ENCODE measurements at regions of chr7 and their contacts with region 1.

Region 1: GRCh38 chr7:45923290-45923689 is 2.2 kb upstream of the IGFBP3 start:
- DNase-seq: peak; percentile 78
- H3K4me3 ChIP-seq: peak overlapping the region; percentile 75
- H3K27ac ChIP-seq: peak overlapping the region; percentile 49
- H3K4me1 ChIP-seq: peaks cover 47% of the 10 kb centered on the region
- H3K27me3 ChIP-seq: peaks cover 10% of the 10 kb centered on the region
- CTCF ChIP-seq: peak; percentile 96

Region 2: GRCh38 chr7:45973725-45974532 is 50.6 kb after region 1 on chr7:
- intact Hi-C with region 1: no loop called
- DNase-seq: no peak
- H3K4me3 ChIP-seq: no peak overlapping the region
- H3K27ac ChIP-seq: no peak overlapping the region
- H3K4me1 ChIP-seq: peaks cover 25% of the 10 kb centered on the region
- H3K27me3 ChIP-seq: no peaks in the 10 kb centered on the region
- CTCF ChIP-seq: no peak

Region 3: DNA sequence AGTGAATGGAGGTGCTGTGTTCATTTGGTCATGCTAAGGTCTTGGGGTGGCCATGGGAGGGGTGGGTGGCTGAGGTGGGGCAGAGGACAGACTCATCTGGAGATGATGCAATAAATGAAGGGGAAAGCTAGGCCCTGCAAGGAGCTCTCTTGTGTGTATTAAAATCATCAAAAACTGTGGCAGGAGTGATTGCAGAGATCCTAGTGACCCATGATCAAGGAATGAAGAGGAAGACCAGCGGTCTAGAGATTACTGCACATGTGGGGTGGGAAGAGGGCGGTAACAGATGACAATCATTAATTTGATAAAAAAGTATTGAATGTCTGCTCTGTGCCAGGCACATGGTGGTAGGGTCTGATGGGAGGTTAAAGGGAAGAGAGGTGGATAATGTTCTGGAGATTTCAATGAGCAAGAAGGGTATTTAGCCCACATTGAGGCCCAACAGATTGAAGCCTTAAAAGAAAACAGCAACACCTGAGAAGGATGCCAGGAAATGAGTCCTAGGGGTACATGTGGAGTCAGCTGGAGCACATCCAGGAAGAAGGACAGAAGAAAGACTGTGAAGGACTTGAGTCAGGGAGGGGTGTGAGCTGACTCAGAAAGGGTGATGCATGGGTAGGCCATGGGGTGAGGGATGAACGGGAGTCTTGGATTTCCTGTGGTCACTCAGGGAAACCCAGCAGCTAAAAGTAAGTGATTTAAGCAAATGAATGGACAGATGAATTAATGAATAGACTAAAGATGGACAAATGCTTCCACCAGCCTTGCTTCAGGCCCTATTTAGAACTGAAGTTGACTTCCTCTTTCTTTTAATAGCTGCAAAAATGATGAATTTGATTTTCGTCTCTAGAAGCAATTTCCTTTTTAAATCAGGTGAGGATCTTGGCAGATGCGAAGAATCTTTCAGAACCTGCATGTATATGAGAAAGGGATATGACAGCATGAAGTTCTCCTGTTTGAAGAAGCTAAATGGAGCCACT is 80.9 kb after region 1 on chr7:
- intact Hi-C with region 1: no loop called
- DNase-seq: no peak
- H3K4me3 ChIP-seq: no peak overlapping the region
- H3K27ac ChIP-seq: no peak overlapping the region
- H3K4me1 ChIP-seq: no peaks in the 10 kb centered on the region
- H3K27me3 ChIP-seq: no peaks in the 10 kb centered on the region
- CTCF ChIP-seq: no peak

Region 4: GRCh38 chr7:46352004-46352954 is 429.0 kb after region 1 on chr7:
- intact Hi-C with region 1: loop called (anchors 2 kb)
- DNase-seq: no peak
- H3K4me3 ChIP-seq: no peak overlapping the region
- H3K27ac ChIP-seq: no peak overlapping the region
- H3K4me1 ChIP-seq: no peaks in the 10 kb centered on the region
- H3K27me3 ChIP-seq: no peaks in the 10 kb centered on the region
- CTCF ChIP-seq: peak; percentile 77

Region 5: DNA sequence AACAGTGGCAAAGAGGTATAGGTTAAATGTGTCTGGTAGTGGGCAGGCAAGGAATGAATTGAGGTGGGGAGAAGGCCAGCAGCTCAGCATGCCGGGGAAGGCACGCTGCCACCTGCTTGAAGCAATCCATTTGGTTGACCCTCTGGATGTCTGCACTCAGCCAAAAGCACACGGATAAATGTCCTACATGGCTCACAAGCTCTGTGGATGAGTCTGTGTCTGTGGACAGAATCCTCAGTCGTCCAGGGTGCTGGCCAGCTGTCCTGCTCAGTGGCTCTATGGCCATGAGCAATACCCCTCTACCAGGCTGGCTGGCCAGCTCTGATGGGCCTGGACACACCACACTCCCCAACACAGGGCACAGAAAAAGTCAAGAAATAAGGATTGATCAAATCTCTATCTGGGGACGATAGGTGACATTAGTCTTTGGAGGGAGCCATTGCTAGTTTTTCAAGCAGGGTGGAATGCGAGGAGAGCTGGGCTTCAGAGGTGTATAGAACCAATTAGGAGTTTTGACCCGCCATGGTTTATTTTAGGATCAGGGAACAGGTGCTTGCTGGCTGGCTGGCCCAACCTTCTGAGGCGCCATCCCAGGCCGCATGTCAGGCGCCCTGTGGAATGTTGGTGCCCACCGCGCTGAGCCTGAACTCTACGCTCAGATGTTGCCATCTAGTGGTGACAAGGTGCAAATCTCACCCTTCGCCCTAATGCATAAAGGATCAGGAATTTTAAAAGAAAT is 1165.2 kb after region 1 on chr7:
- intact Hi-C with region 1: loop called (anchors 5 kb)
- DNase-seq: peak; percentile 49
- H3K4me3 ChIP-seq: no peak overlapping the region
- H3K27ac ChIP-seq: no peak overlapping the region
- H3K4me1 ChIP-seq: peaks cover 12% of the 10 kb centered on the region
- H3K27me3 ChIP-seq: no peaks in the 10 kb centered on the region
- CTCF ChIP-seq: peak; percentile 95